ENCODE measurements at regions of chr12 and their contacts with region 1.

Region 1: DNA sequence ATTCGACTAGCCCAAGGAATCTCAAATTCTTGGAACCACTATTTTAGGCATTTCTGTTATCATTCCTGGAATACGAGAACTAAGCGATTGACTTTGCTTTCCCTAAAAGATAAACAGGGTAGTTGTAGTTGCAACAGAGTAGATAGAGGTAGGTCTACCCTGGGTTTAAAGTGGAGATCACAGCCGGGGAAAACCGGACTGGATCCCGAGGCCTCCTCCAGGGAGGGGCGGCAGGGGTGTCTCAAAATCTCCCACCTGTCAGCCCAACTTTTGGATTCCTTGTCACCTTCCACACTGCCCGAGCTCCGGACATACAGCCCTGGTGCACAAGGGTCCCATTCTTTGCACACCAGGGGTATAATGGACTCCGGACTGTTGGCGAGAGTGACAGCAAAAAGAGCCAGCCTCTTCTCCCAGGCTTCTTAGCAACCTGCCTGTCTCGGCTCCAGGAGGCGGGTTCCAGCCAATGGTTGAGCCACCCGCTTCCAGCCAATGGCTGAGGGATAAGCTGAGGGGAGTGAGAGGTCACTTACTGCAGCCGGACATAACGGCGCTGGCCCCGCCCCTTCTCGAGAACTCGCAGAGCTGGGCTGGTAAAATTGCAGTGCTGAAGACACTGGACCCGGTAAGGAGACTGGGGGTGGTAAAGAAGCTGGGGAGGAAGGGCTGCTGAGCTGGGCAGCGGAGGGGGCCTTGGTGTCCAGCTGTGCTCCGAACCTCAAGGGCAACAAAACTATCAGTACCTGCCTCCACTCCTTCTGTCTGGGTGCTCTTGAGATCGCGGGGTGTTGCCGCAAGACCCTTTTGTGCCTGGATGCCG is at the start of gene SUOX:
- DNase-seq: peak; percentile 97
- H3K4me3 Mint-ChIP-seq: peak within 1 kb of the TSS; percentile 90
- H3K27ac Mint-ChIP-seq: peak within 1 kb of the TSS; percentile 91
- H3K4me1 Mint-ChIP-seq: peaks cover 36% of the 10 kb centered on the region
- H3K27me3 Mint-ChIP-seq: no peaks in the 10 kb centered on the region
- CTCF ChIP-seq: no peak
- total RNA-seq, gene SUOX: 31.1 and 34.9 TPM in 2 replicates

Region 2: GRCh38 chr12:55789171-55789570 is 207.8 kb before region 1 on chr12:
- CTCF ChIA-PET with region 1: no interaction called
- intact Hi-C with region 1: no loop called
- DNase-seq: no peak
- H3K4me3 Mint-ChIP-seq: no peak overlapping the region
- H3K27ac Mint-ChIP-seq: no peak overlapping the region
- H3K4me1 Mint-ChIP-seq: no peaks in the 10 kb centered on the region
- H3K27me3 Mint-ChIP-seq: no peaks in the 10 kb centered on the region
- CTCF ChIP-seq: no peak

Region 3: DNA sequence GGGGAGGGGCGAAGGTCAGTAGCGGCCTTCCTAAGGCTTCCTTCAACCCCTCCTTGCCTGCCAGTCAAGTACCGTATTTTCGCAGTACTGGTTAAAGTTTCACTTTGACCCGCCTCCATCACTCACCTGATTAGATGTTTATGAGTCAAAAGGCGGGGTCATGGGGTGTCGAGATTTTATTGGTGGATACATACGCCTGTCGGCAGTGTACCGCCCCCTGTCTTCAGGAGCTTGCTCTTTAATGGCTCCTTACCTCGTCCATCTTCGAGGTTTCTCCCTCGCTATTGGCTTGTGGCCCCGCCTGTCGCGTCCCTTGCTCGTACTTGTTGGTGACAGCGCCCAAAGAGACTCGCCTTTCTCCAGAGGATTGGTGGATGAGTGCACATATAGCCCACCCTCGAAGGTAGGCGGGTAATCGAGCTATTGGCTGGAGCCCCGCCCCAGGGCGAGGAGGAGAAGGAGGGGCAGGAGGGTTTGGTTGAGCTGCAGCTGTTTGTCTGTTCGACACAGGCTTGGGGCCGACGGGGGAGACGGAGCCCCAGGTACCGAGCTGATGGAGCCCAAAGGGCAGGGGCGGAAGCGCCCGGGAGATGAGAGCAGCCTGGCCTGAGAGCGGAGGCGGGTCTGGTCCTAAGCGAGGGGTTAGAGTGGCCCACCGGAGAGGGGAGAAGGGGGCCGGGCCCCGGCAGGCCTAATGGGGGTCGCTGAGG is 23.2 kb before region 1 on chr12 and contains the start of gene RAB5B:
- CTCF ChIA-PET with region 1: interaction called, 25 read pairs
- intact Hi-C with region 1: no loop called
- DNase-seq: peak; percentile 99
- H3K4me3 Mint-ChIP-seq: no peak within 1 kb of the TSS
- H3K27ac Mint-ChIP-seq: no peak within 1 kb of the TSS
- H3K4me1 Mint-ChIP-seq: peaks cover 15% of the 10 kb centered on the region
- H3K27me3 Mint-ChIP-seq: no peaks in the 10 kb centered on the region
- CTCF ChIP-seq: peak; percentile 14
- total RNA-seq, gene RAB5B: 84.7 and 91.6 TPM in 2 replicates

Region 4: DNA sequence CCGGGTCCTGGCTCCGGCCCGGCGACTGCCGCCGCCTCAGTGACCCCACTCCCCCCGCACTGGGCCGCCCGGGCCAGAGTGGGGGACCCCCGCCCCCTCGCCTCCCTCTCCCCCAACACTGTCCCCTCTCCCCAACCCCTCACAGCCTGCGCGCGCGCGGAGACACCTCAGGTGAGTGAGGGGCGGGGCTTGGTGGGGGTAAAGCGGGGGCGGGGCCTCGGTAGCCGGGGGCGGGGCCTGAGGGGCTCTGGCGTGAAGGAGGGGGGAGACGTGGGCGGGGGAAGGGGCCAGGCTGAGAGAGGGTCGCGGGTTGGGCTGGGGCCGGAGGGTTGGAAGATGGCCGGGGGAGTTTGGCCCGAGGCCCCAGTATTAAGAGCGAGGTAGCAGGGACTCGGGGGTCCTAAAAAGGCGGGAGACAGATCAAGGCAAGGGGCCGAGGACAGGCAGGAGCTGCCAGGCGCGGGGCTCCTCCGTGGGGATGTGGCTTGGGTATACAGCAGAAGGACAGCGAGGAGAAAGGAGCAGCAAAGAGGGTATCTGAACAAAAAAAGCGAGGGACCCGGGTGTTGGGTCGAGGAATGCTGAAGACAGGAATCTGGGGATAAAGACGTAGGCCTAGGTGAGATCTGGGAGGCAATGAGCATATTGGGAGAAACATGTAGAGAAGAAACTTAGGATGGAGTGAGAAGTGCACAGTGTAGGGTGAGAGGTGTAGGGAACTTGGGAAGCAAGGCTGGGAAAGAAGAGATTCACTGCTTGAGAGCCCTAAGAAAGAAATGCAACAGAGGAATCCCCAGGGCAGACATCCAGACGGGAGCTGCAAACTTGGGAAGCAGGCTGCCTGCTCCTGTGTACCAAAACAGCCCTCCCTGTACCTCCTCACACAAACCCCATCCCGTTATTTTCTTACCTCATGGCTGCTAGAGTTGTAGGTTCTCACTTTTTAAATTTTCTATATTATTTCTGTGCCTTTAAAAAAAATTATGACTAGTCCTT is 10.9 kb after region 1 on chr12:
- CTCF ChIA-PET with region 1: interaction called, 20 read pairs
- intact Hi-C with region 1: no loop called
- DNase-seq: peak; percentile 76
- H3K4me3 Mint-ChIP-seq: peak overlapping the region; percentile 78
- H3K27ac Mint-ChIP-seq: peak overlapping the region; percentile 30
- H3K4me1 Mint-ChIP-seq: peaks cover 16% of the 10 kb centered on the region
- H3K27me3 Mint-ChIP-seq: no peaks in the 10 kb centered on the region
- CTCF ChIP-seq: no peak

Region 5: DNA sequence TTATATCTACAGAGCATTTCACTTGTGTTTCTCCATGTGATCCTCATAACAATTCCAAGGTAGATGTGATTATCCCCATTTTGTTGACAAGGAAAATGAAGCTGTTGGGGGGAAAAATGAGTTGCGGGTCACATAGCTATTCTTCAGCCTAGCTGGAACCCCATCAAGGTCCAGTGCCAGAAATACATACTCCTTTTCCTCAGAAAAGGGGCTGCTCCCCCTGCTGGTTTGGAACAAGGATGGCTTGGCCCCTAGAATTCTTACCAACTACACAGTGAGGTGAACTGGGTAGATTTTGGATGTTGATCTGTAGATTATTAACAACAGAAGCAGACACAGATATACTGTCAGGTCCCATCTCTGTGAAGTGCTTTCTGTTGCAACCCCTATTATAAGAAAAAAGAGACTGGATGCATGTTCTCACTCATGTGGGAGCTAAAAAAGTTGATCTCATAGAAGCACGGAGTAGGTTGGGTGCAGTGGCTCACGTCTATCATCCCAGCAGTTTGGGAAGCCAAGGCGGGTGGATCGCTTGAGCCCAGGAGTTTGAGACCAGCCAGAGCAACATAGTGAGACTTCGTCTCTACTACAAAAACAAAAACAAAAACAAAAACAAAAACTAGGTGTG is 32.9 kb after region 1 on chr12:
- CTCF ChIA-PET with region 1: interaction called, 46 read pairs
- intact Hi-C with region 1: loop called (anchors 1 kb)
- DNase-seq: peak; percentile 78
- H3K4me3 Mint-ChIP-seq: no peak overlapping the region
- H3K27ac Mint-ChIP-seq: no peak overlapping the region
- H3K4me1 Mint-ChIP-seq: peaks cover 16% of the 10 kb centered on the region
- H3K27me3 Mint-ChIP-seq: no peaks in the 10 kb centered on the region
- CTCF ChIP-seq: peak; percentile 74

Region 6: GRCh38 chr12:56041552-56042429 is 44.9 kb after region 1 on chr12 and contains the start of gene RPS26:
- CTCF ChIA-PET with region 1: interaction called, 12 read pairs
- intact Hi-C with region 1: loop called (anchors 1 kb)
- DNase-seq: peak; percentile 93
- H3K4me3 Mint-ChIP-seq: peak within 1 kb of the TSS; percentile 90
- H3K27ac Mint-ChIP-seq: peak within 1 kb of the TSS; percentile 95
- H3K4me1 Mint-ChIP-seq: peaks cover 18% of the 10 kb centered on the region
- H3K27me3 Mint-ChIP-seq: no peaks in the 10 kb centered on the region
- CTCF ChIP-seq: peak; percentile 51
- total RNA-seq, gene RPS26: 50.6 and 50.7 TPM in 2 replicates

Region 7: DNA sequence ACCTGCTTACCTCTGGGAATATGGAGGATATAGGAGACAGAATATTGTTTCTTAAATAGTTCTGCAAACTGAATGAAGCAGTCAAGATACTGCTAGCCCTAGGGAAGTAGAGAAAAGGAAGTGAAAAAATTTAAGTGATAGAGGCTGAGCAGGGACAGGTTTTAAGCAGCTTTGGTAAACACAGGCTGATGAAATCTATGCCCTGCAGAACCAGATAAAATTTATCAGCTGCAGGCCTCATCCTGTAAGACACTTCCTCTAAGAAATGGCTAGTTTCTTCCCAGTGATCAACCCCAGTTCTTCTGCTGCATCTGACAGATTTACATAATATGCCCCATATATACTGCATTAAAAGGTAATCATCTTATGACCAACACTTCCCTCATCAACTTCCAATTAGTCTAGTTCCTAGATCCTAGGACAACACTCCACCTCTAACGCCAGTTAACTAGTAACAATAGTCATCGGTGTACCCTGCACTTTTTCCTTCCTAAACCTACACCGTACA is 129.9 kb after region 1 on chr12:
- CTCF ChIA-PET with region 1: no interaction called
- intact Hi-C with region 1: no loop called
- DNase-seq: no peak
- H3K4me3 Mint-ChIP-seq: peak overlapping the region; percentile 98
- H3K27ac Mint-ChIP-seq: peak overlapping the region; percentile 72
- H3K4me1 Mint-ChIP-seq: peaks cover 35% of the 10 kb centered on the region
- H3K27me3 Mint-ChIP-seq: no peaks in the 10 kb centered on the region
- CTCF ChIP-seq: no peak